Vagina (tissue), 2 donors: ENCODE measurements at regions of chr13 and their contacts with region 1.

Region 1: GRCh38 chr13:27171827-27172494 is 350 bp upstream of the USP12 start:
- DNase-seq: no peak
- H3K4me3 ChIP-seq: peak overlapping the region; percentile 76 to 98
- H3K27ac ChIP-seq: peak overlapping the region; percentile 96
- H3K4me1 ChIP-seq: peaks cover 33% of the 10 kb centered on the region
- H3K27me3 ChIP-seq: no peaks in the 10 kb centered on the region
- CTCF ChIP-seq: no peak
- POLR2A ChIP-seq: no peak

Region 2: GRCh38 chr13:27251166-27252091 is 79.5 kb after region 1 on chr13 and contains the start of gene RPL21:
- intact Hi-C with region 1: loop called (anchors 5 kb)
- DNase-seq: peak in 1 of 2 donors; percentile 98
- H3K4me3 ChIP-seq: peak within 1 kb of the TSS; percentile 70 to 92
- H3K27ac ChIP-seq: peak within 1 kb of the TSS; percentile 91
- H3K4me1 ChIP-seq: peaks cover 52% of the 10 kb centered on the region
- H3K27me3 ChIP-seq: no peaks in the 10 kb centered on the region
- CTCF ChIP-seq: no peak
- POLR2A ChIP-seq: peak in 1 of 2 donors; percentile 57
- total RNA-seq, gene RPL21: 579 TPM

Region 3: DNA sequence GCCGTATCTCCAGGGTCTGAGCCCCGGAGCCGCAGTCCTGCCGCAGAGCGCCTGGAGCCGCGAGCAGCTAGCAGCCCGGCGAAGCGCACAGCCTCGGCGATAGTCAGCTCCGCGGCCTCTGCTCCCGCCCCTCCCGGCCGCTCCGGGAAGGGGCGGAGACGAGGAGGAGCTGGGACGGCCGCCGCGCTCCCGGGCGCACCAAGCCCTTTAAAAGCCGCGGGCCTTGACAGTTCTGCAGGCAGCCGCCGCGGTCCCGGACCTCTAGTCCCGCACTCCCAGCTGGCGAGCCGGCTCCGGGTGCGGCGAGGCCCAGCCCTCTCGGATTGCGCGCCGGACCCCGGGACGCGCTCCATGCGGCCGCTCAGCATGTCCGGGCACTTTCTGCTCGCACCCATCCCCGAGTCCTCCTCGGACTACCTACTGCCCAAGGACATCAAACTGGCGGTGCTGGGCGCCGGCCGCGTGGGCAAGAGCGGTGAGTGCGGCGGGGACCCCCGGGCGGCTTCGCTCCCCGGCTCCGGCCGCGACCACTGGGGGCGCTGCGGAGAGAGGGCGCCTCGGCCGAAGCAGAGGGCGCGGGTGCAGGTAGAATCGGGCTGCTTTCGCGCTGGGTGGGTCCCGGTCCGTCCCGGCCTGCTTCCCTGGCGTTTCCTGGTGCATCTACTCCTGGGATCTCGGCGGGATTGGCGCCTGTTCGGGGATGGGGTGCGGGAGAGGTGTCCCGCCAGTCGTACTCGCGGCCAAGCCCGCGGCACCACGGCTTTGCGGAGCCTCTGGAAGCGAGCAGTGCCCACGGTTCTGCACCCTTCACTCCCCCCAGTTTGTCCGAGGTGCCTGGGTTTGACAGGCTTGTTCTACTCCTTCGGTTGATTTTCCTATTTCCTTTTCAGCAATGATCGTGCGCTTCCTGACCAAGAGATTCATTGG is 98.9 kb after region 1 on chr13 and contains the start of gene RASL11A:
- intact Hi-C with region 1: loop called (anchors 5 kb)
- DNase-seq: no peak
- H3K4me3 ChIP-seq: peak within 1 kb of the TSS; percentile 78 to 91
- H3K27ac ChIP-seq: peak within 1 kb of the TSS; percentile 88
- H3K4me1 ChIP-seq: peaks cover 56% of the 10 kb centered on the region
- H3K27me3 ChIP-seq: no peaks in the 10 kb centered on the region
- CTCF ChIP-seq: peak; percentile 46 to 87 (median 83)
- POLR2A ChIP-seq: peak in 1 of 2 donors; percentile 84
- total RNA-seq, gene RASL11A: 74.9 TPM